Right cardiac atrium (tissue), 5 donors: ENCODE measurements at regions of chr9 and their contacts with region 1.

Region 1: DNA sequence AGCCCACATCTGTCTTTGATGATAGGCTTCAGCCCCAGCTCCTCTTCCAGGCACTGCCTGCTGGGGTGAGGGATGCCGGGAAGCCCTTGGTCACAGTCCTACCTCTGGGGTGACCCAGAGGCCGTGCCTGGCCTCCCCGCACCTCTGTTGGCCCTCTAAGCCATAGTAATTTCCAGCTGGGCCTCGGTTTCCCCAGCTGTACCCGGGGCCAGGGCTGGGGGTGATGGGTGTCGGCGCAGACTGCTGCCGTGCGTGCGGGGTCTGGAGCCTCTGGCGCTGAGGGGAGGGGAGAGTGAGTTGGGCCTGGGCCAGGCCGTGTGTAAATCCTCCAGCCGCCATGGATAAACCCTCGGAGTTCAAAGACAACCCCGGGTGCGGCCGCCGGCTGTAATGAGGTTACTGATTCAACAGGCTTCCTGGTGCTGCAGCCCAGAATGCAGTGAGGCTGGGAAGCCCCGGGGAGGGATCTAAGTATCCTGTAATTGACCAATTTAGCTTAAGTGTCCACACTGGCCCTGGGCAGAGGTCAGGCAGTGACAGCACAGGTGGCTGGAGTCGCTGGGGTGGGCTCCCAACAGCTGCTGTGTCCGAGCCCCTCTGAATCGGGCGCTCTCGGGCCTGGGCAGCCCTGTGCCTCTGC is 7.1 kb downstream of the RXRA start:
- DNase-seq: peak in 2 of 3 donors; percentile 76 to 78
- ATAC-seq: peak in 1 of 2 donors; percentile 7
- H3K4me3 ChIP-seq: no peak overlapping the region
- H3K27ac ChIP-seq: no peak overlapping the region
- H3K4me1 ChIP-seq: peaks cover 54% of the 10 kb centered on the region
- H3K27me3 ChIP-seq: no peaks in the 10 kb centered on the region

Region 2: DNA sequence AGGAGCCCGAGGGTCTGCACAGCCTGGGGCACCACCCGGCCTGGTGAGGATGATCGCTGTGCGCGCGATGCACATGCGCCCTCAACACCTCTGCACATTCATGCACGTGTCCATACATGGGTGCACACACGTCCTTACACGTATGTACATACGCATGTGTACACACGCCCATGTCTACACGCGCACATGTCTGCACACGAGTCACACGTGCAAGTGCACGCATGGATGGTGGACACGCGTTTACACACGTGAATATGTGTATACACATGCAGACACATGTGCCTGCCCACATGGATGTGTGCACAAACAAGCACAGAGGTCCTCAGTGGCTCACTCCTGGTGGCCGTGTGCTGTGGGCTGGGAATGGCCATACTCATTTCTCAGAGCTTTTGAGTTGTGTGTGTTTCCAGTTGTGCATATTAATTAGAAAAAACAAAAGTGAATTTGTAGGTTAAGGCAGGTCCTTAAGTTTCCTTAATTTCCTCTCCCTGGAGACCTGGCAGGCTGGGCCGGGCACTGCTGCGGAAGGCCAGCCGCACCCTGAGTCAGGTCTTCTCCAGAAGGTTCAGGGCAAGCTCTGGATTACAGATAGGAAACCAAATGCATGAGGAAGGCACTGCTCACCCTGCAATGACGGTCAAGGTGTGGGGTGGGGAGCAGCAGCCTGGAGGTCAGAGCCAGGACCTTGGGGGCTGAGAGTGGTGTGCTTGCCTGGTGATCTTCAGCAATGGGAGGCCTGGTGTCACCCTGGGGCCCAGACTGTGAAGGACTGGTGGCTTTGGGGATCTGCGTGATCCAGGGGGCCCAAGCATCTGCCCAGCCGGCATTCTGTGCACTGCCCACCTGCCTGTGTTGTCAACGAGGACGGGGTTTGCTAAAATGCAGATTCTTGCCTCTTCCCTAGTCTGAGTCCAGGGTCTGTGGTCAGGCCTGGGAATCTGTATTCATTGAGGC is 167.7 kb before region 1 on chr9:
- intact Hi-C with region 1: loop called in 3 of 4 experiments (anchors 5 to 10 kb)
- DNase-seq: peak in 2 of 3 donors; percentile 76 to 79
- ATAC-seq: no peak
- H3K4me3 ChIP-seq: no peak overlapping the region
- H3K27ac ChIP-seq: no peak overlapping the region
- H3K4me1 ChIP-seq: peaks cover 3% of the 10 kb centered on the region
- H3K27me3 ChIP-seq: no peaks in the 10 kb centered on the region